Right ventricle myocardium inferior (tissue), 1 donor: ENCODE measurements at regions of chr19 and their contacts with region 1.

Region 1: DNA sequence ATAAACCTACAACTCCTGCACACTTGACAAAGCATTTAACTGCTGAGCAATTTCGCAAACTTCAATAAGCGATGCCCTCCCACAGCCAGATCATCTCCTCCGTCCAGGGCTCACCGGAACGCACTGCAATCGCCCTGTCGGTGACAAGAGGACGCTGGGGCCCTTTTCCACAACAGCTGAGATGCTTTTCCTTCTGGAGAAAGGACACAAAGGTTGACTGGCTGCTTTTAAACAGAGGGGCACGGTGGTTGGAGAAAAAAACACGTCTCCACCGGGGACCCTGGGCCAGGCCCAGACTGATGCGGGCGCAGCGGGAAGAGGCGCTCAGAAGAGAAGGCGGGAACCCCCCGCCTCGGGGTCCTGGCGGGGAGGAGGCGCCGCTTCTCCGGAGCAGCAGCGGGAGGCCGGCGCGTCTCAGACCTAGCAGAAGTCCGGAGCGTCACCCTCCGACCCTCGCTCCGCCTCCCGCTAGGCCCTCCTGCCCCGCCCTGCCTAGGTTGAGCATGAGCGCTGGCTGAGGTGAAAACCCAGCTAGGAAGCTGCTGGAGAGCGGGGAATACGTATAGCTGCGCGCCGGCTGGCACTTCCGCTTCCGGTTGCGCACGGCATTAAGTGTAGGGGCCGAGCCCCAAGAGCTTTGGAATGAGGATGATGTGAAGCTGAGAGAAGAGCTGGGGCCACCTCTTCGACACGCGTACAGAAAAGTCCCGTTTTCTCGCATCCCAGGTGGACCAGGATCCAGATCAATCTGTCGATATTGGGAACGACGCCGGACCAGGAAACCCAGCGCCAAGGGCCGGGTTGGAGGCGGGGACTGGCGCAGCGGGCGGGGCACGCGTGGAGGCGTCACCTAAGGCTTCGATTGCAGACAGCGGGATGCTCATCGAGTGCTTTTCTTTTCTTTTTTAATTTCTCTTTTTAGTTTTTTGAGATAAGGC is at the start of gene ZNF846:
- DNase-seq: peak; percentile 98
- ATAC-seq: peak; percentile 99
- total RNA-seq, gene ZNF846: 9.3 TPM

Region 2: DNA sequence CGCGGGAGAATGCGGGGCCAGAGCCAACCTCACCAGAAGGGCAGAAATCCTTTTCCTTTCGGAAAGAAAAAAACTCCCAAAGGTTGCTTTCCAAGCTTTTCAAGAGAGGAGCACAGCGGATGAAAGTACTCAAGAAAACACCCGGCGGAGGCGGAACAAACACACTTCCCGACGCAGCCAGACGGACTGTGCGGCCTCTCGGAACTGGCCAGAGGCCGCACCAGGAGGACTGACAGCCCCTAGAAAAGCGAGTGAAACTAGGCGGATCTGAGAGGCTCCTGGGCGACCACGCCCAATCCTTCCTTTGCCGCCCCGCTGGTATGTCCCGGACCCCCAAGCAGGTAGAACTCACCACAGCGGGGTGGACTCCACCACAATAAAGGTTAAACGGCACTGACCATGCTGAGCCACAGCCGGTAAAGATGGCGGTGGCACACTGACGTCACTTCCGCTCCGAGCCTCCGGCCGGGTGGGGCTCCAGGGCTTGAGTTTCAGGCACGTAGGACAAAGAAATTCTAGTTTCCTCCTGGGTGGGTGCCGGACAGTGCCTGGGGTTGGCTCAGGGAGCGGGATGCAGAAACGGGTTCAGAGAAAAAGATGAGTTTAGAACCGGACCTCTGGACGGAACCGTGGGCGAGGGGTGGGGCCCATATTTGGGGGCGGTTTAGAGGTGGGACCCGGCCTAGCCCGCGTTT is 93.6 kb before region 1 on chr19 and contains the start of gene ZNF562:
- intact Hi-C with region 1: loop called (anchors 1 kb)
- DNase-seq: peak; percentile 95
- ATAC-seq: peak; percentile 95
- total RNA-seq, gene ZNF562: 21.7 TPM

Region 3: GRCh38 chr19:9785367-9786331 is 17.2 kb after region 1 on chr19:
- intact Hi-C with region 1: loop called (anchors 2 kb)
- DNase-seq: peak; percentile 97
- ATAC-seq: peak; percentile 93